IMR-90 (cell line): ENCODE measurements at regions of chr1 and their contacts with region 1.

Region 1: GRCh38 chr1:154546264-154547063 is 12.0 kb downstream of the UBE2Q1 start:
- DNase-seq: peak; percentile 58
- ATAC-seq: peak; percentile 97
- H3K4me3 ChIP-seq: no peak overlapping the region
- H3K27ac ChIP-seq: no peak overlapping the region
- H3K4me1 ChIP-seq: no peaks in the 10 kb centered on the region
- H3K27me3 ChIP-seq: peaks cover 32% of the 10 kb centered on the region
- CTCF ChIP-seq: peak; percentile 79
- POLR2A ChIP-seq: no peak
- RAD21 ChIP-seq: peak; percentile 89

Region 2: GRCh38 chr1:153572569-153573015 is 973.9 kb before region 1 on chr1:
- CTCF ChIA-PET with region 1: no interaction called
- POLR2A ChIA-PET with region 1: no interaction called
- dilution Hi-C with region 1: no loop called
- in situ Hi-C with region 1: no loop called
- intact Hi-C with region 1: no loop called
- DNase-seq: peak; percentile 82
- ATAC-seq: peak; percentile 82
- H3K4me3 ChIP-seq: no peak overlapping the region
- H3K27ac ChIP-seq: peak overlapping the region; percentile 36; the same call in 1 of the 2 replicates
- H3K4me1 ChIP-seq: peaks cover 16% of the 10 kb centered on the region
- H3K27me3 ChIP-seq: no peaks in the 10 kb centered on the region
- CTCF ChIP-seq: peak; percentile 86
- POLR2A ChIP-seq: peak; percentile 46; the same call in 1 of the 2 replicates
- RAD21 ChIP-seq: peak; percentile 89

Region 3: GRCh38 chr1:154352581-154353459 is 193.6 kb before region 1 on chr1:
- CTCF ChIA-PET with region 1: no interaction called
- POLR2A ChIA-PET with region 1: no interaction called
- dilution Hi-C with region 1: no loop called
- in situ Hi-C with region 1: no loop called
- intact Hi-C with region 1: loop called (anchors 5 kb)
- DNase-seq: peak; percentile 31
- ATAC-seq: peak; percentile 78
- H3K4me3 ChIP-seq: peak overlapping the region; percentile 4; the same call in 1 of the 2 replicates
- H3K27ac ChIP-seq: peak overlapping the region; percentile 26; the same call in 1 of the 2 replicates
- H3K4me1 ChIP-seq: peaks cover 10% of the 10 kb centered on the region; the same call in 1 of the 2 replicates
- H3K27me3 ChIP-seq: peaks cover 2% of the 10 kb centered on the region
- CTCF ChIP-seq: no peak
- POLR2A ChIP-seq: no peak
- RAD21 ChIP-seq: no peak

Region 4: DNA sequence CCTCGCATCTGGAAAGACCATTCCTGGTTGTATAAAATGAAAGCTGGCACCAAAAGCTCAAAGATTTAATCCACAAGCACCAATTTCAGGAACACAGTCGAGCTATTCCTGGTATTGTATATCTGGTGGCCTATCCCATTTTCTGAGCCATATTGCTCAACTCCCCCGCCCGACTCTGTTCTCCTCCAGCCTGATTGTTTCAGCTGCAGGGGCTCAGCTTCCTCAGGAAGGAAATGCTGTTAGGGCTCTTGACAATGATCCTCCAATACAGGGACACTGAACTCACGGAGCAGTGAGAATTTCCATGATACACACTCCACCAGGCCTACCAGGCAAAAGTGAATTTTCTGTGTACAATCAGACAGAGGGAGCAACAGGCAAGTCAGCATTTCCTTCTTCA is 61.4 kb before region 1 on chr1:
- CTCF ChIA-PET with region 1: interaction called, 11 read pairs
- POLR2A ChIA-PET with region 1: no interaction called
- dilution Hi-C with region 1: no loop called
- in situ Hi-C with region 1: loop called (anchors 5 kb)
- intact Hi-C with region 1: loop called (anchors 1 kb)
- DNase-seq: no peak
- ATAC-seq: no peak
- H3K4me3 ChIP-seq: no peak overlapping the region
- H3K27ac ChIP-seq: no peak overlapping the region
- H3K4me1 ChIP-seq: peaks cover 3% of the 10 kb centered on the region; the same call in 1 of the 2 replicates
- H3K27me3 ChIP-seq: peaks cover 39% of the 10 kb centered on the region
- CTCF ChIP-seq: no peak
- POLR2A ChIP-seq: no peak
- RAD21 ChIP-seq: no peak

Region 5: GRCh38 chr1:154574716-154575115 is 28.3 kb after region 1 on chr1:
- CTCF ChIA-PET with region 1: no interaction called
- POLR2A ChIA-PET with region 1: no interaction called
- dilution Hi-C with region 1: no loop called
- in situ Hi-C with region 1: no loop called
- intact Hi-C with region 1: no loop called
- DNase-seq: peak; percentile 49
- ATAC-seq: peak; percentile 69
- H3K4me3 ChIP-seq: no peak overlapping the region
- H3K27ac ChIP-seq: no peak overlapping the region
- H3K4me1 ChIP-seq: peaks cover 4% of the 10 kb centered on the region; the same call in 1 of the 2 replicates
- H3K27me3 ChIP-seq: peaks cover 20% of the 10 kb centered on the region
- CTCF ChIP-seq: no peak
- POLR2A ChIP-seq: no peak
- RAD21 ChIP-seq: no peak

Region 6: GRCh38 chr1:154627257-154628120 is 81.0 kb after region 1 on chr1:
- CTCF ChIA-PET with region 1: no interaction called
- POLR2A ChIA-PET with region 1: no interaction called
- dilution Hi-C with region 1: no loop called
- in situ Hi-C with region 1: no loop called
- intact Hi-C with region 1: no loop called
- DNase-seq: peak; percentile 88
- ATAC-seq: peak; percentile 58
- H3K4me3 ChIP-seq: peak overlapping the region; percentile 83
- H3K27ac ChIP-seq: peak overlapping the region; percentile 82
- H3K4me1 ChIP-seq: peaks cover 9% of the 10 kb centered on the region
- H3K27me3 ChIP-seq: peaks cover 5% of the 10 kb centered on the region; the same call in 1 of the 2 replicates
- CTCF ChIP-seq: no peak
- POLR2A ChIP-seq: peak; percentile 93
- RAD21 ChIP-seq: 0 out of 2 replicates have a peak, but pooled peaks have one; percentile 1